ENCODE measurements at regions of chr16 and their contacts with region 1.

Region 1: DNA sequence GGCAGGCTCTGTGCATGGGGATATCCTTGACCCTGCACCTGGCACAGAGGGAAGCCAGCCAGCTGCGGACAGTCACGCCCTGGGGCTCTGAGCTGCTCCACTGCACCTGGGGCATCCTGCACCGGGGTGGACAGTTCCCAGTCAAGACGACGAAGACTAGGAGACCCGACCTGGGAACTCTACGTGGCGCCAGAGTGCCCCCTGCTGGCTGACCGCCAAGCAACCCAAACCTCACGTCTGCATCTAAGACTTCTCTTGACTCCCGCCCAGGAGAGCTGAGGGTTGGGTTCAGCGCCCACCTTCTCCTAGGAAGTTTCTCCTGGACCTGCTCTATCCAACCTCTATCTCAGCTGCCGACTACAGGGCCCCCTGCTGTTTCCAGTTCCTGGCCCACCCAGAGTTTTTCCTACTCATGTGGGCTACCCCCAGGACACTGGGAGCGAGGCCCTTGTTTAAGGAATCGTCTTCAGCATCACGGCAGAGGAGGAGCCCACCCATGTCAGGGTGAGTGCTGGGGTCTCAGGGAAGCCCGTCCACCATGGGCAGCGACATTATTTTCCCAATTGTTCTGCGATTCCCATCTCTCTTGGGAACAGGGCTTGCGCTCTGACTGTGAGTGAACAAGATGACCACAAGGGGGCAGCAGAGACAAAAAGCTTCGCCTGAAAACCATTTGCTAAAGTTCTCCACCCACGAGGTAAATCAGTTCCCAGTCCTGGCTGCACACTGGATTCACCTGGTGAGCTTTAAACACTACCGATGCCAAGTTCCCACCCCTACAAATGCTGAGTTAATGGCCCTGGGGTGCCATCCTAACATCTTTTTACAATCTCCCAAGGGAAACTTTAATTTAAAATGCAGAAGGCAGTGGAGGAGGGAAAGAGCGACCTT is 29.3 kb downstream of the TLE7 start:
- DNase-seq: peak; percentile 77 to 93 (median 79)
- H3K4me3 ChIP-seq: no peak overlapping the region
- H3K27ac ChIP-seq: no peak overlapping the region
- H3K4me1 ChIP-seq: no peaks in the 10 kb centered on the region
- H3K27me3 ChIP-seq: no peaks in the 10 kb centered on the region
- CTCF ChIP-seq: peak; percentile 94

Region 2: DNA sequence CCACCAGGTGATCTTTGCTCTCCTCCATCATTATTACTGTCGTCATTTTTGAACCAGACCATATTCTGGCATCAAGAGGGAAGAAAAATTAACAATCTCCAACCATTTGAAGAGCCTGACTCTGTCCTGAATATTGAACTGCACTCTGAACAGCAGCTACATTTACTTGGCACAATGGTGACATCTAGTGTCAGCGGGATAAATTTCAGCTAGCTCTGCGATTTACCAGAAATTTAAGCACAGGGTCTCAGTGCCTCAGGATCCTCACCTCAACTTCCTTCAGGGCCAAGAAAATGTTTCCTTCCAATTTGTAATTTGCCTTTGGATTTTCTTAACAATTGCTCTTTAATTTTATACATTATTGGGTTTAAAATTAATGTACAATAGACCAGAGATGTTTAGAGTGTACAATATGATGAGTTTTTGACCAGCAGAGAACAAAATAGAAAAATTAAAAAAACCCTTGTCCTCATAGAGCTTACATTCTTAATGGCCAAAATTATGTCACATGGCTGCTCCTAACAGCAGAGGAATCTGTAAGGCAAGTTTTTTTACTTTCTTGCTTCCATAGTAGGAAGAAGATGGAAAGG is 87.4 kb after region 1 on chr16:
- intact Hi-C with region 1: loop called (anchors 5 kb)
- DNase-seq: peak in 4 of 5 donors; percentile 41 to 72 (median 62)
- H3K4me3 ChIP-seq: no peak overlapping the region
- H3K27ac ChIP-seq: no peak overlapping the region
- H3K4me1 ChIP-seq: no peaks in the 10 kb centered on the region
- H3K27me3 ChIP-seq: no peaks in the 10 kb centered on the region
- CTCF ChIP-seq: peak; percentile 60

Region 3: DNA sequence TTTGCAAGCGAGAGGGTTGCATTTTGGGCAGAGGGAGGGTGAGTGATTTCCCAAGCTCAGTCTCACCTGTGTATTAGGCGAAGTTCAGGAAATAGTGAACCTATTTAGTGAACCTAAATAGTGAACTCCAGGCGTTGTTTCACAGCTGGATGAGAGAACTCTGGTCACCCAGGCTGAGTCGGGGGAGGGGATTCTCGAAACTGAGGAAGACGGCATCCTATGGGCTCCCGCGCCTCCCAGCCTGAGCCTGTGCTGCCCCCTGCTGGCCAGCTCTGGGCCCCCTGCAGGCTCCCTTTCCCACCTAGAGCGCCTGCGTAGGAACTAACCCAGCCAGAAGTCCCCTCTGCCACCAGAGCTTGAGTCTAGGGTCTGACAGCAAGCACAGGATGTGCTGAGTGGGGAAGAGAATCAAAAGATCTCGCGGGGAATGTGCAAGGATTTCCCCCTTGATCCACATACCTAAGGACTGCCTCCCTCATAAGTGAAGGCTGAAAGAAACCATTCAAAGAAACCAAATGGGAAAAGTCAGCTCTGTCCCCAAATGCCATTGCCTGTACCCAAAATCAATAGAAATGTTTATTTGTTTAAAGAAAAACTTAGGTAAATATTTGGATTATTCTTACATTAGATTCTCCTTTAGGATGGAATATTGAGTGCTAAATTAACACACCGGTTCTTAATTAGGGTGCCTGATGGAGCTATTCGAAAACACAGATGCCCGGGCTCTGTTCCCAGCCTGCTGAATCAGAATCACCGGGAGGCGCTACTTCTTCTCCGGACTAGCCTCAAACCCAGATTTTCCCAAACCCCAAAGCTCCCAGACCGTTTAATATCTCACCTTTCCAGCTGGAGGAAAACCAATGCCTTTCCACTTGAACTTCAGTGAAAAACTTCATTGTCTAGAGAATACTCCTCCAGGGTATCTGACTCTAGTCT is 198.7 kb after region 1 on chr16:
- intact Hi-C with region 1: loop called (anchors 5 kb)
- DNase-seq: peak; percentile 82 to 89 (median 86)
- H3K4me3 ChIP-seq: no peak overlapping the region
- H3K27ac ChIP-seq: no peak overlapping the region
- H3K4me1 ChIP-seq: no peaks in the 10 kb centered on the region
- H3K27me3 ChIP-seq: no peaks in the 10 kb centered on the region
- CTCF ChIP-seq: peak; percentile 78

Measured in kidney (tissue), 22 donors.